CD4-positive, alpha-beta memory T cell (primary cell): ENCODE measurements at regions of chr14 and their contacts with region 1.

Region 1: GRCh38 chr14:75176142-75176820 is at the start of gene TMED10:
- DNase-seq: peak; percentile 95 to 96 (median 95)
- H3K4me3 ChIP-seq: peak within 1 kb of the TSS; percentile 78 to 84
- H3K4me3 Mint-ChIP-seq: peak within 1 kb of the TSS; percentile 83 to 97 (median 94)
- H3K27ac ChIP-seq: peak within 1 kb of the TSS; percentile 99
- H3K27ac Mint-ChIP-seq: peak within 1 kb of the TSS; percentile 98 to 99 (median 98)
- H3K4me1 ChIP-seq: peaks cover 38% of the 10 kb centered on the region
- H3K4me1 Mint-ChIP-seq: peaks cover 28 to 57% (median 44%) of the 10 kb centered on the region in 4 donors
- H3K27me3 ChIP-seq: no peaks in the 10 kb centered on the region
- H3K27me3 Mint-ChIP-seq: no peaks in the 10 kb centered on the region
- total RNA-seq, gene TMED10: 202 to 217 TPM

Region 2: DNA sequence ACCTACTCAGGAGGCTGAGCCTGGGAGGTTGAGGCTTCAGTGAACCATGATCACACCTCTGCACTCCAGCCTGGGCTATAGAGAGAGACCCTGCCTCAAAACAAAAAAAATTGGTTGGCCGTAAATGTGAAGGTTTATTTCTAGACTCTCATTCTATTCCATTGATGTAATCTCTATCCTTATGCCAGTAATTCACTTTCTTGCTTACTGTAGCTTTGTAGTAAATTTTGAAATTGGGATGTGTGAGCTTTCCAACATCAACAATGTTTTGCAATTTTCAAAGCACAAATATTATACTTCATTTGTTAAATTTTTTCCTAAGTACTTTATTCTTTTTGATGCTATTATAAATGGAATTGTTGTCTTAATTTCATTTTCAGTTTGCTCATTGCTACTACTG is 1066.9 kb before region 1 on chr14:
- CTCF ChIA-PET with region 1: no interaction called
- POLR2A ChIA-PET with region 1: no interaction called
- intact Hi-C with region 1: no loop called
- DNase-seq: no peak
- H3K4me3 ChIP-seq: no peak overlapping the region
- H3K4me3 Mint-ChIP-seq: no peak overlapping the region
- H3K27ac ChIP-seq: no peak overlapping the region
- H3K27ac Mint-ChIP-seq: no peak overlapping the region
- H3K4me1 ChIP-seq: no peaks in the 10 kb centered on the region
- H3K4me1 Mint-ChIP-seq: no peaks in the 10 kb centered on the region
- H3K27me3 ChIP-seq: no peaks in the 10 kb centered on the region
- H3K27me3 Mint-ChIP-seq: no peaks in the 10 kb centered on the region

Region 3: GRCh38 chr14:74762917-74763802 is 413.1 kb before region 1 on chr14 and contains the start of gene YLPM1:
- CTCF ChIA-PET with region 1: no interaction called
- POLR2A ChIA-PET with region 1: no interaction called
- intact Hi-C with region 1: loop called (anchors 1 kb)
- DNase-seq: peak; percentile 95 to 97 (median 96)
- H3K4me3 ChIP-seq: peak within 1 kb of the TSS; percentile 77
- H3K4me3 Mint-ChIP-seq: peak within 1 kb of the TSS; percentile 87 to 99 (median 91)
- H3K27ac ChIP-seq: peak within 1 kb of the TSS; percentile 93
- H3K27ac Mint-ChIP-seq: peak within 1 kb of the TSS; percentile 92 to 98 (median 95)
- H3K4me1 ChIP-seq: peaks cover 50% of the 10 kb centered on the region
- H3K4me1 Mint-ChIP-seq: peaks cover 33 to 54% (median 44%) of the 10 kb centered on the region in 4 donors
- H3K27me3 ChIP-seq: no peaks in the 10 kb centered on the region
- H3K27me3 Mint-ChIP-seq: no peaks in the 10 kb centered on the region
- total RNA-seq, gene YLPM1: 83.1 to 90.3 TPM

Region 4: DNA sequence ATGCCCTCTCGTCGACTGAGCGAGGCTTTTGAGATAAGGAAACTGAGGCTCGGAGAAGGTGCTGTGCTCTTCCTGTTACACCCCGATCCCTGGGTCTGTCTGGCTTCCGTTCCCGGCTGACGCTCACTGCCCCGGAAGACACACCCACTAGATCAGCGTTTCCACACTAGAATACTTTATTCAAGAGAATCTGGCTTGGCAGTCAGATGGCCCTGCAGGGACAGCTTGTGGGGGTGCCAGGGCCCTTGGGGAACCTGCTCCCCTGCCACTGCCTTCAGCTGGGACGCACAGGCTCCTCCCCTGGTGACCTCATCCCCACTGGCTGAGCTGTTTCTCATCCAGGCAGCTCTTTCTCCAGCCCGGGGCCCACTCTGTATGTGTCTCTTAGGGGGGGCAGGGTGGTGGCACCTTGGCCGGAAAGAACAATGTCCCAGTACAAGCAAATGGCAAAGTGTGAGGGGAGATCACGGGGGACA is 234.6 kb before region 1 on chr14:
- CTCF ChIA-PET with region 1: no interaction called
- POLR2A ChIA-PET with region 1: no interaction called
- intact Hi-C with region 1: no loop called
- DNase-seq: peak; percentile 38 to 60 (median 51)
- H3K4me3 ChIP-seq: peak overlapping the region; percentile 28 to 40
- H3K4me3 Mint-ChIP-seq: peak overlapping the region; percentile 70 to 91 (median 82)
- H3K27ac ChIP-seq: peak overlapping the region; percentile 55
- H3K27ac Mint-ChIP-seq: peak overlapping the region; percentile 92 to 97 (median 95)
- H3K4me1 ChIP-seq: peaks cover 57% of the 10 kb centered on the region
- H3K4me1 Mint-ChIP-seq: peaks cover 26 to 59% (median 49%) of the 10 kb centered on the region in 4 donors
- H3K27me3 ChIP-seq: no peaks in the 10 kb centered on the region
- H3K27me3 Mint-ChIP-seq: no peaks in the 10 kb centered on the region

Region 5: GRCh38 chr14:75126679-75127473 is 49.4 kb before region 1 on chr14 and contains the start of gene NEK9:
- CTCF ChIA-PET with region 1: interaction called, 4 read pairs
- POLR2A ChIA-PET with region 1: interaction called, 17 read pairs
- intact Hi-C with region 1: loop called (anchors 1 kb)
- DNase-seq: peak; percentile 86 to 92 (median 90)
- H3K4me3 ChIP-seq: peak within 1 kb of the TSS; percentile 80 to 99
- H3K4me3 Mint-ChIP-seq: peak within 1 kb of the TSS; percentile 88 to 98 (median 97)
- H3K27ac ChIP-seq: peak within 1 kb of the TSS; percentile 94
- H3K27ac Mint-ChIP-seq: peak within 1 kb of the TSS; percentile 95 to 99 (median 99)
- H3K4me1 ChIP-seq: peaks cover 42% of the 10 kb centered on the region
- H3K4me1 Mint-ChIP-seq: peaks cover 29 to 52% (median 34%) of the 10 kb centered on the region in 4 donors
- H3K27me3 ChIP-seq: no peaks in the 10 kb centered on the region
- H3K27me3 Mint-ChIP-seq: no peaks in the 10 kb centered on the region
- total RNA-seq, gene NEK9: 129 to 133 TPM

Region 6: DNA sequence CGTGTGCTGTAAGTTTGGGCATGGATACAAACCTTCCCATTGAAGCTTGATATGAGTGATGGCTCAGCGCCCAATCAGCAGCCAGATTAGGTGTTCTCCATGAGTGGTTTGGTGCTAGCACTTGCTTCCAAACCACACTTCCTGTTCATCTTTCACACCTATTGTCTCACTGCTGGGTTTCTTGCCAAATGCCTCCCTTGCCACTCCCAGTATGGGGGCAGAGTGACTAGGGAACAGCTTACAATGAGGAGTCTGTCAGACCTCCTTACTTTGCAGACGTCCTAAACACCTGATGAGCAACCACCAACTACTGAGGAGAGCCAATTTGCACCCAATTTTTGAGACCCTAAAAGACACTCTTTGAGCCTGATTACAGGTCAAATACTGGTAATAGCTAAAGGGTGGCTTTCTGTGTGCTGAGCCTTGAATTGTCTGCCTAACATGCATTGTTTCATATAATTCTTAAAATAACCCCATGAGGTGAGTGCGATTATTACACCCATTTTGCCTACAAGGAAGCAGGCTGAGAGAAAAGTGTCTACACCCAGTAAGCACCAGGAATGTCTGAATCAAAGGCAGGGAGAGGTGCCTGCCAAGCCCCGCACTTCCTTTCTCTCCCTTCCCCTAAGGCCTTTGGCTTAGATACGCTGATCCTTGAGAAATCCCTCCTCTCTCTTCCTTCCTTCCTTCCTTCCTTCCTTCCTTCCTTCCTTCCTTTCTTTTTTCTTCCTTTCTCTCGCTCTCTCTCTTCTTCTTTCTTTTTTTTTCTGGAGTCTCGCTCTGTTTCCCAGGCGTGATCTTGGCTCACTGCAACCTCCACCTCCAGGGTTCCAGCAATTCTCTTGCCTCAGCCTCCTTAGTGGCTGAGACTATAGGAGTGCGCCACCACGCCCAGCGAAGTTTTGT is 54.1 kb after region 1 on chr14:
- CTCF ChIA-PET with region 1: no interaction called
- POLR2A ChIA-PET with region 1: interaction called, 10 read pairs
- intact Hi-C with region 1: loop called (anchors 1 kb)
- DNase-seq: peak; percentile 64 to 87 (median 75)
- H3K4me3 ChIP-seq: no peak overlapping the region
- H3K4me3 Mint-ChIP-seq: peak overlapping the region in 7 of 8 donors; percentile 47 to 87 (median 76)
- H3K27ac ChIP-seq: peak overlapping the region; percentile 47
- H3K27ac Mint-ChIP-seq: peak overlapping the region; percentile 85 to 97 (median 94)
- H3K4me1 ChIP-seq: peaks cover 43% of the 10 kb centered on the region
- H3K4me1 Mint-ChIP-seq: peaks cover 36 to 63% (median 53%) of the 10 kb centered on the region in 4 donors
- H3K27me3 ChIP-seq: no peaks in the 10 kb centered on the region
- H3K27me3 Mint-ChIP-seq: no peaks in the 10 kb centered on the region

Region 7: GRCh38 chr14:75258615-75259466 is 82.6 kb after region 1 on chr14:
- CTCF ChIA-PET with region 1: interaction called, 6 read pairs
- POLR2A ChIA-PET with region 1: interaction called, 29 read pairs
- intact Hi-C with region 1: loop called (anchors 1 kb)
- DNase-seq: peak; percentile 99 to 100 (median 100)
- H3K4me3 ChIP-seq: peak overlapping the region; percentile 52 to 54
- H3K4me3 Mint-ChIP-seq: peak overlapping the region; percentile 82 to 90 (median 88)
- H3K27ac ChIP-seq: peak overlapping the region; percentile 95
- H3K27ac Mint-ChIP-seq: peak overlapping the region; percentile 98 to 100 (median 100)
- H3K4me1 ChIP-seq: peaks cover 23% of the 10 kb centered on the region
- H3K4me1 Mint-ChIP-seq: peaks cover 21 to 44% (median 33%) of the 10 kb centered on the region in 4 donors
- H3K27me3 ChIP-seq: no peaks in the 10 kb centered on the region
- H3K27me3 Mint-ChIP-seq: no peaks in the 10 kb centered on the region

Region 8: DNA sequence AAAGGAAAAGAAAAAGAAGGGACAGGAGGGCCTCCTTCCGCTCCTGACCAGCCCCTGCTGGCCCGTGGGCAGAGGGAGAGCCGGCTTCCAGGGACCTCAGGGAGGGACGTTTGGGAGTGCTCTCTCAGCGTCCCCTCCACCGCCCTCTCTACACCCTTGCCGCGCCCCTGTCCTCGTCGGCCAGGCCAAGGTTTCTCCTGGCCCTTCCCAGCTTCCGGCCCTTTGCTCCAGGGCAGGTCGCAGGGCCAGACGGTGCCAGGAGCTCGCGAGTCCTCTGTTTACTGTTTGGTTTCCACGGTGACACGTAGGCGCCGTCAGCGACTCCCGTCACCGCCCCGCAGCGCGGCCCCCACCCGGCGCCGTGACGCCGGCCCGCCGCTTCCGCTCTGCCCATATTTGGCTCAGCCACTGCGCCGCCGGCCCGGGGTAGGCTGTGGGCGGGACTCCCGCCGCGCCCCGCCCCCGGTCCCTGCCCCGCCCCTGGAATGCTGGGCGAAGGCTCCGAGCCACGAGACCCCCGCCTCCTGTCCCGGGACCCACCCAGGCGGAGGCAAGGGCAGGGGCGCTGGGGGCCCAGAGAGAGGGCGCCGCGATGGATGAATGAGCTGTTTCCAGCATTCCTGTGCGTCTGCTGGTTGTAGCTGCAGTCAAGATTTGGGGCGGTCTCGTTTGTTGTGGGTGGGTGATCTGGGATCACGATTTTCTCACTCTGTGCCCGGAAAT is 117.8 kb after region 1 on chr14:
- CTCF ChIA-PET with region 1: interaction called, 19 read pairs
- POLR2A ChIA-PET with region 1: interaction called, 19 read pairs
- intact Hi-C with region 1: loop called (anchors 1 kb)
- DNase-seq: peak; percentile 93 to 97 (median 96)
- H3K4me3 ChIP-seq: peak overlapping the region; percentile 47 to 68
- H3K4me3 Mint-ChIP-seq: peak overlapping the region; percentile 83 to 97 (median 92)
- H3K27ac ChIP-seq: peak overlapping the region; percentile 90
- H3K27ac Mint-ChIP-seq: peak overlapping the region; percentile 84 to 99 (median 98)
- H3K4me1 ChIP-seq: peaks cover 30% of the 10 kb centered on the region
- H3K4me1 Mint-ChIP-seq: peaks cover 10 to 28% (median 22%) of the 10 kb centered on the region in 4 donors
- H3K27me3 ChIP-seq: no peaks in the 10 kb centered on the region
- H3K27me3 Mint-ChIP-seq: peaks cover 0 to 1% of the 10 kb centered on the region in 2 donors